ENCODE measurements at regions of chr16 and their contacts with region 1.

Region 1: DNA sequence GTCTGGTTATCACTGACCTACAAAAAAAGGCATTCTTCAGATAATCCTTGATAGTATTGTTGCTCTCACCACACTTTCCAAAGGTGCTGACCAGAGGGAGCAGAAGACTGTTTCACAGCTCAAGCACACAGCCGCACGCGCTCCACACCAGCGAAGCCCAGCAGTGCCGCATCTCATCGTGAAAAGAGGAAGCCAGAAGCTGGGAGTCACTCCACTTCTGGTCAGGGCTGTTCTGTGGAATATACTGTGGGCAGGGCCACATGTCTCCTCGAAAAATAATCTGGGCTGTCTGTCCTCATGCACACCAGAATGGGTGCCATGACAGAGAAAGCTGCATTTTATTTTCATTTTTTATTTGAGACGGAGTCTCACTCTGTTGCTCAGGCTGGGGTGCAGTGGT is 7.3 kb upstream of the PRSS36 start:
- DNase-seq: no peak
- ATAC-seq: no peak
- H3K4me3 Mint-ChIP-seq: no peak overlapping the region
- H3K27ac Mint-ChIP-seq: no peak overlapping the region
- H3K4me1 Mint-ChIP-seq: no peaks in the 10 kb centered on the region
- H3K27me3 Mint-ChIP-seq: no peaks in the 10 kb centered on the region
- CTCF ChIP-seq: no peak

Region 2: GRCh38 chr16:31094424-31095120 is 62.6 kb before region 1 on chr16 and contains the start of gene VKORC1:
- CTCF ChIA-PET with region 1: no interaction called
- POLR2A ChIA-PET with region 1: interaction called, 10 read pairs
- DNase-seq: peak; percentile 95
- ATAC-seq: peak; percentile 94
- H3K4me3 Mint-ChIP-seq: peak within 1 kb of the TSS; percentile 87
- H3K27ac Mint-ChIP-seq: peak within 1 kb of the TSS; percentile 84
- H3K4me1 Mint-ChIP-seq: peaks cover 14% of the 10 kb centered on the region
- H3K27me3 Mint-ChIP-seq: peaks cover 2% of the 10 kb centered on the region; the same call in 1 of the 2 replicates
- CTCF ChIP-seq: no peak
- total RNA-seq, gene VKORC1: 85.7 to 114 TPM (median 110 TPM) in 3 replicates